ENCODE measurements at regions of chr4 and their contacts with region 1.

Region 1: DNA sequence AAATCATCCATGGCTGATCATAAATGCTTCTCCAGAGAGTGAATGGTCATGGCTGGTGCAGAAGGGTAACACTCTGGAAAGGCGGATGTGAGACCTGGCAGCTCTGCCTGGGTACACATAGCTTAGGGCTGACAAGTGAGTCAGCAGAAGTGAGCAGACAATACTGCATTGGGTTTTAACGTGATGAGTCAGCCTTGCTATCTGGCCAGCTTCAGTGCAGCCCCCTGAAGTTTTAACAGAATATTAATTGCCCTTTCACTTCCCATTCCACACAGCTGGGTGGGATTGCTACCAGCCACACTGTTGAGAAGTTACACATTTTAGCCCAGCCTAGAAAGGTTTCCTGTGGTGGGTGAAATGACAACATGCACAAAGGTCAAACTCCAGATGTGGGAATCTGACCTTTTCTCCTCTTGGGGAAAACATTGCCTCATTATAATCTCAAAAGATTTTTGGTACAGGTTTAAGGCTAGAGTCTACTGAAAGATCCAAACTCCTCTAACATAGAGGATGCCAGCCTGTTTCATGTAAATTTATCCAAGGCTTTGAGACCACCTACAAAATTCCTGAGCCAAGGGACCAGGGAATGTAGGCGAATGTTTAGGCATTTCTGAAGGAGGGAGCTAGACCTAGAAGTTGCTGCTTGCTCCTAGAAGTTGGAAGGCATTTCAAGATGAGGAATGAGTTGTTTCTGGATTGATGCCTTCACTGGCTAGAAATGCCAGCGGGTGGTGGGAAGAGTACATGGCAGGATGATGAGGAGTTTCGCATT is 230.3 kb upstream of the PGRMC2 start:
- DNase-seq: peak; percentile 73
- CTCF ChIP-seq: no peak

Region 2: GRCh38 chr4:128454281-128455075 is 63.4 kb before region 1 on chr4:
- CTCF ChIA-PET with region 1: interaction called, 10 read pairs
- POLR2A ChIA-PET with region 1: no interaction called
- DNase-seq: peak; percentile 78
- CTCF ChIP-seq: peak; percentile 76

Region 3: DNA sequence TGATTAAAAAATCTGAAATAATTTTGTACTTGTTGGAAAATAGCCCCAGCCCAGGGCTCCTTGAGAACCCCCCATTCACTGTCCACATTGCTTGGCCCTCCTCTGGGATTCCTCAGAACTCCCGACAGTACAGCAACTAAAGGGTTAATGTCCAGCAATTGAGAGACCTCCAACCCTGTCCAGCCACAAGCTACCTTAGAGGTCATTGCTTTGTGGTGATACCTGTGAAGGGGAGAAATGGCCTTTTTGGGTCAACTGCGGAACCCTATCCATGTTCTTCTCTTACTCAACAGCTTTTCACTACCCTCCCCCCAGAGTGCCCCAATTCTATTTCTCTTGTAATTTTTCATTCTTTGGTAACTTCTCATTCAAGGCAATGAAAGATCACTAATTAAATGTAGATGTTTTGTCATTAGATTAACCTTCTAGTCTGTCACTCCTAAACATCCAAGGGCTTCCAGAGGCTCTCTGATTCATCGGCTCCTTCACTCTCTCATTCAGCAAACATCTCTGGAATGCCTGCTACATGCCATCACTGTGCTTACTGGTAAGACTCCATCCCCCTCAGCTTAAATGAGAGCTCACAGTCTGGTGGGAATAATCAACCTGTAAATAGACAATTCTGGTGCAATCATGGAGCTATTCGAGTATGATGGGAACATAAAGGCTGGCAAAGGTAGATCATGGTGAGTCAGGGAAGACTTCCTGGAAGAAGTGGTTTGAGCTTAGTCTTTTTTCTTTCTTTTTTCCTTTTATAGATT is 11.0 kb after region 1 on chr4:
- CTCF ChIA-PET with region 1: interaction called, 10 read pairs
- POLR2A ChIA-PET with region 1: no interaction called
- DNase-seq: no peak
- CTCF ChIP-seq: no peak